Mammary epithelial cell (primary cell): ENCODE measurements at regions of chr21 and their contacts with region 1.

Region 1: GRCh38 chr21:41933313-41934086 is 20.3 kb downstream of the C2CD2 start:
- DNase-seq: peak; percentile 54
- H3K4me3 ChIP-seq: peak overlapping the region; percentile 29 to 43 (median 42)
- H3K27ac ChIP-seq: peak overlapping the region; percentile 89
- H3K4me1 ChIP-seq: peaks cover 54% of the 10 kb centered on the region
- H3K27me3 ChIP-seq: no peaks in the 10 kb centered on the region
- CTCF ChIP-seq: peak; percentile 45 to 66

Region 2: DNA sequence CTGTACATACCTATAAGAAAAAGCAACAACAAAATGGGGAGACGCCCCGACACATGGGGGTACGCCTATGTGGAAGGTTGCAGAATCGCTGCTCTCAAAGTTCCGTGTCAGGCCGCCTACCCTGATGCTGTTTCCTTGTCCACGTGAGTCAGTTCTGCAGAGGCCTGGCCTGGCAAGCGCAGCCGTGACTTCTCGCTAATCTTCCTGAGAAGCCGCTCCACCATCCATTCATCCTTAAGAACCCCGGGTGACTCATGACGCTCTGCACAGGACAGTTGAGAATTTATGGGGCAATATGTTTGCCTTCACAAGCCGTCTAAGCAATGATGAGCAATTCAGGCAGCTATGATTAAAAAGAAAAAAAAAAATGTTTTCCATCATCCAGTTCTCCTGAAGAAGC is 303.3 kb before region 1 on chr21:
- CTCF ChIA-PET with region 1: no interaction called
- dilution Hi-C with region 1: no loop called
- in situ Hi-C with region 1: no loop called
- intact Hi-C with region 1: loop called (anchors 5 kb)
- DNase-seq: peak; percentile 99
- H3K4me3 ChIP-seq: no peak overlapping the region
- H3K27ac ChIP-seq: peak overlapping the region; percentile 78
- H3K4me1 ChIP-seq: peaks cover 49% of the 10 kb centered on the region
- H3K27me3 ChIP-seq: no peaks in the 10 kb centered on the region
- CTCF ChIP-seq: no peak

Region 3: DNA sequence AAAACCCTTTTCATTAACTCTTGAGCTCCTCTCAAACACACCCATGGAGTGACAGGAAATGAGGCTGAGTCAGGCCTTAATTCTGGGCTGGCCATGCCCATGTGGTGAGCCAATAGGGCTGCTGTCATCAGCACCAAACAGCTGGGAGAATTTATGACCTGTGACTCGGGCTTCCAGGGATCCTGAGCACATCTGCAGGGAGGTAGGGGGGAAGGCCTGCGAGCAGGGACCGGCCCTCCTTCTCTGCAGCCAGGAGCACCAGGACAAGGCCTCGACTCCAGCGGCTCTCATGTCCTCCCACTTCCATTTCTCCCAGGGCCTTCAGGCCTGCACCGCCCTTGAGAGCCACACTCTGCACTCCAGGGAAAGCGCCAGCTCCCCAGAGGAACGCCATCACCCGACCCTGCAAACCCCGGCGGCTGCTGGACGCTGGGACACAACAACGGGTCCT is 181.2 kb before region 1 on chr21:
- CTCF ChIA-PET with region 1: no interaction called
- dilution Hi-C with region 1: no loop called
- in situ Hi-C with region 1: no loop called
- intact Hi-C with region 1: loop called (anchors 5 kb)
- DNase-seq: peak; percentile 83
- H3K4me3 ChIP-seq: peak overlapping the region in 1 of 3 experiments; percentile 5
- H3K27ac ChIP-seq: peak overlapping the region; percentile 50
- H3K4me1 ChIP-seq: peaks cover 74% of the 10 kb centered on the region
- H3K27me3 ChIP-seq: no peaks in the 10 kb centered on the region
- CTCF ChIP-seq: no peak

Region 4: GRCh38 chr21:41879190-41879998 is 54.1 kb before region 1 on chr21 and contains the start of gene PRDM15:
- CTCF ChIA-PET with region 1: no interaction called
- dilution Hi-C with region 1: no loop called
- in situ Hi-C with region 1: no loop called
- intact Hi-C with region 1: loop called (anchors 1 kb)
- DNase-seq: peak; percentile 62
- H3K4me3 ChIP-seq: peak within 1 kb of the TSS; percentile 66 to 85 (median 84)
- H3K27ac ChIP-seq: peak within 1 kb of the TSS; percentile 85
- H3K4me1 ChIP-seq: peaks cover 12% of the 10 kb centered on the region
- H3K27me3 ChIP-seq: no peaks in the 10 kb centered on the region
- CTCF ChIP-seq: no peak
- total RNA-seq, gene PRDM15: 7.2 to 8.1 TPM

Region 5: GRCh38 chr21:42107881-42108553 is 174.5 kb after region 1 on chr21:
- CTCF ChIA-PET with region 1: interaction called, 3 read pairs
- dilution Hi-C with region 1: no loop called
- in situ Hi-C with region 1: loop called in 1 of 2 experiments (anchors 10 kb)
- intact Hi-C with region 1: loop called (anchors 1 kb)
- DNase-seq: peak; percentile 60
- H3K4me3 ChIP-seq: no peak overlapping the region
- H3K27ac ChIP-seq: no peak overlapping the region
- H3K4me1 ChIP-seq: no peaks in the 10 kb centered on the region
- H3K27me3 ChIP-seq: no peaks in the 10 kb centered on the region
- CTCF ChIP-seq: peak; percentile 89 to 96